ENCODE measurements at regions of chr5 and their contacts with region 1.

Region 1: DNA sequence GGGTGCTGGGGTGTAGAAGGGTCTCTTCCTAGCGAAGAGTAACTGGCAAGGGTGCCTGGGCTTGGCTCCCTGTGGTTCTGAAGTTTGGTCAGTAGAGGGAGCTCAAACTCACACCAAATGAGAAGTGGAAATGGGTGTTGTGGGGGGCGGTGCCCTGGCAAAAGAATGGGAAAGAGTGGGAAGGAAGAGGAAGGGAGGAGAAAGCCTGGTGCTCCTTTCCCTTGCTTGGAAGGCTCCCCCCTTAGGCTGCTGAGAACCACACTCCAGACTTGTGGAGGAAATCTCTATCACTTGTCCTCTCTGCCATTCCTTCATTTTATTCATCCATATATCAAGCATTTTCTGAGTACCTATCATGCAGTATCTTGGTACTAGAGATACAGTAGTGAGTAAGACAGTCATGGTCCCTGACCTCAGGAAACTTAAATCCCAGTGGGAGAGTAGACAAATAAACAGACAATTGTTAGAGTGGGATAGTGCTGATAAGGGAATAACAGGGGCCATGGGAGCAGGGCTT is 13.0 kb downstream of the SLC4A9 start:
- DNase-seq: peak; percentile 44
- H3K4me3 ChIP-seq: no peak overlapping the region
- H3K27ac ChIP-seq: no peak overlapping the region
- H3K27me3 ChIP-seq: peaks cover 6% of the 10 kb centered on the region
- CTCF ChIP-seq: peak; percentile 91

Region 2: DNA sequence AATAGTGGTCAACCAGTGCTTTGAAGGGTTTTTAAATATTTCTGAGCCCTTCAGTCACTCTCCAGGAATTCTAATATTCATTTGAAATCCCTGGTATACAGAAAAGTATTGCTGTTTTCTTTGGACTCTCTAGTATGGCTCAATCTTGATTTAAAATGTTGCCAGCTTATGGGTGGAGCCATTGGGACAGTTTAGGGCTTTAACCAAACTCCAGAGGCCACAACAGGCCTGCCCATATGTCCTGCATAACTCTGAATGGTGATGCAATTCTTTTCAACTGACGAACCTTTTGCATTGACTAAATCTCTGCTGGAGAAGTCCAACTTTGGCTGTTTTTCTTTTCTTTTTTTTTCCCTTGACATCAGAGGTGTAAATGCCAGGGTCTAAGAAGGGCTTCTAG is 18.3 kb after region 1 on chr5:
- CTCF ChIA-PET with region 1: interaction called, 27 read pairs
- POLR2A ChIA-PET with region 1: no interaction called
- DNase-seq: no peak
- H3K4me3 ChIP-seq: no peak overlapping the region
- H3K27ac ChIP-seq: no peak overlapping the region
- H3K27me3 ChIP-seq: no peaks in the 10 kb centered on the region
- CTCF ChIP-seq: no peak

Region 3: GRCh38 chr5:140718241-140718580 is 345.2 kb after region 1 on chr5:
- CTCF ChIA-PET with region 1: interaction called, 24 read pairs
- POLR2A ChIA-PET with region 1: no interaction called
- DNase-seq: no peak
- H3K4me3 ChIP-seq: no peak overlapping the region
- H3K27ac ChIP-seq: peak overlapping the region; percentile 11
- H3K27me3 ChIP-seq: no peaks in the 10 kb centered on the region
- CTCF ChIP-seq: no peak

Region 4: DNA sequence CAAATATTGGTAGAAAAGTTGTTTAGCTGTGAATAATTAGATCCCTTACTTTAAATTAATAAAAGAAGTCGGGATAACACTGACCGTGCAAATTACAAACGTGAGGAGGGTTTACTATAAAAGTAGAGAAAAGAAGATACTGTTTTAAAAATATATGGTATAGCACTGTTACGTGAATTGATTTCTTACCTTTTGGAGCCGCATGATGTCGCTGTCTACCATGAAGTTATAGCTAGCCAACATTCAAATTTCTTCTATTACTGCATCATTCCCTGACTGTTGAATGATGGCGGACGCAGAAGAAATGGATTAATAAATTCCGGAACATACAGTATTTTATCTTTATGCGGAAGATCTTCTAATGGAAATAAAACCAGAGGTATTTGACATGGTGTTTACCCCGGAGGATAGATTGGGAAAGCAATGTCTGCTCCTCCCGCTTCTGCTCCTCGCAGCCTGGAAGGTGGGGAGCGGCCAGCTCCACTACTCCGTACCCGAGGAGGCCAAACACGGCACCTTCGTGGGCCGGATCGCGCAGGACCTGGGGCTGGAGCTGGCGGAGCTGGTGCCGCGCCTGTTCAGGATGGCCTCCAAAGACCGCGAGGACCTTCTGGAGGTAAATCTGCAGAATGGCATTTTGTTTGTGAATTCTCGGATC is 454.8 kb after region 1 on chr5 and contains the start of gene PCDHA6:
- CTCF ChIA-PET with region 1: no interaction called
- POLR2A ChIA-PET with region 1: no interaction called
- DNase-seq: no peak
- H3K4me3 ChIP-seq: no peak within 1 kb of the TSS
- H3K27ac ChIP-seq: no peak within 1 kb of the TSS
- H3K27me3 ChIP-seq: no peaks in the 10 kb centered on the region
- CTCF ChIP-seq: no peak
- polyA plus RNA-seq, gene PCDHA6: 0.02 and 0.09 TPM in 2 replicates